Activated naive CD4-positive, alpha-beta T cell treated with anti-CD3 and anti-CD28 coated beads for 36 hours (primary cell): ENCODE measurements at regions of chr11 and their contacts with region 1.

Region 1: DNA sequence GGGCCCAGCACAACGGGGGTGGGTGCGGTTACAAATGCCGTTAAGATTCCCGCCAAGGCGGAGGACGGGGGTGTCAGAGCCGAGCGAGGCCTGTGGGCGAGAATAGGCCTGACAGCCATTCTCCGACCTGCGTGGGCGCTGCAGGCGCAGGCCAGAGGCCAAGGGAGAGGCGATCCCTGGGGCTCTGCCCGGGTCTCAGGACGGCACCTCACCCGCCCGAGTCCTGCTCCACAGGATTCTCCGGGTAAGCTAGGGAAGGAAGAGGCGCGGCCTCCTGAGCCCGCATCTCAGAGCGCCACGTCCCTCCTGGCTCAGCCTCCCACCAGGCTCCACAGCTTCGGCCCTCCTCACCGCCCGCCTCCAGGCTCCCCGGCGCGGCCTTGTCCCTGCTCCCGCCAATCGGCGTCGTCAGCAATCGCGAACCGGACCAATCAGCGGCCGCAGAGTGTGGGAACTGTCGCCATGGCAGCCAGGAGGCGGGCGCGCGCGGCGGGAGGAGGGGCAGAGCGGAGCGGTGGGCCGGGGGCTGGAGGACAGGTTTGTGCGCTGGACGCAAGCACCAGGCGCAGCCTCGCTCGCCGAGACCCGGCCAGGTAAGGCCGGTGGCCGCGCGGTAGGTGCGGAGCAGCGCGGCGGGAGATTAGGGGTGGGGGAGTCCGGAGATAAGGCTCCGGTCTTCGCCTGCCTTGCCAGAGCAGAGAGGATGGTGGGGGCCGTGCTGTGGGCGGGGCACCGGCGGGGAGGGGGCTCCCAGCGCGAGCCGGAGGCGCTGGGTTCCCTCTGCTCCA is at the start of gene NUCB2:
- DNase-seq: peak; percentile 98
- H3K4me3 Mint-ChIP-seq: peak within 1 kb of the TSS; percentile 75
- H3K27ac Mint-ChIP-seq: peak within 1 kb of the TSS; percentile 83
- H3K4me1 Mint-ChIP-seq: peaks cover 33% of the 10 kb centered on the region
- H3K27me3 Mint-ChIP-seq: no peaks in the 10 kb centered on the region
- total RNA-seq, gene NUCB2: 67.7 to 74.0 TPM

Region 2: DNA sequence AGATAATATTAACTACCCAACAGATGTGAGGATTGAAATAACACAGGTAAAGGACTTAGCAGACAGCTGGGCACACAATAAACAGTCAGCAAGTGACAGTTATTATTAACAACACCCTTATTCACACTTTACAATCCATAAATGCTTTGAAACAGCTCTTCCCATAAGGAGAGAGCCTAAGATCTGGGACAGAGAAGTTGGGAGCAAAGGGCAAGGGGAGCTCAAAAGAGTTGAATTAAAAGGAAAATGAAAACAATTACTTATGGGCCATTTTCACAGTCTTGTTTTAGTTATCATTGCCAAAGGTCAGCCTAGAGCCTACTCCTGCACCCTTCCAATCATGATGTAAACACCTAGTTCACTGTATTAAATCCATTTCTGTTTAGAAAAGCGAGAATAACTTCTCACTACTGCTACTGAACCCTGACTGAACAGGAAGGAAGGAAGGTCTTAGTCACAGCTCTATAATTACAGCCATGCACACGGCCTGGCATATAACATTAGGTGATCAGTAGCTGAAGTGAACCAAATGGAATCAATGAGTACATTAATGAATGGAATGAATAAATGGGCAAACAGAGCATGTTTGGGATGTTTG is 373.6 kb before region 1 on chr11:
- CTCF ChIA-PET with region 1: no interaction called
- intact Hi-C with region 1: loop called (anchors 5 kb)
- DNase-seq: peak; percentile 30
- H3K4me3 Mint-ChIP-seq: peak overlapping the region; percentile 3
- H3K27ac Mint-ChIP-seq: peak overlapping the region; percentile 92
- H3K4me1 Mint-ChIP-seq: peaks cover 43% of the 10 kb centered on the region
- H3K27me3 Mint-ChIP-seq: no peaks in the 10 kb centered on the region

Region 3: GRCh38 chr11:17207317-17208258 is 68.8 kb before region 1 on chr11 and contains the start of gene PIK3C2A:
- CTCF ChIA-PET with region 1: no interaction called
- intact Hi-C with region 1: loop called (anchors 1 kb)
- DNase-seq: peak; percentile 97
- H3K4me3 Mint-ChIP-seq: peak within 1 kb of the TSS; percentile 99
- H3K27ac Mint-ChIP-seq: peak within 1 kb of the TSS; percentile 92
- H3K4me1 Mint-ChIP-seq: peaks cover 30% of the 10 kb centered on the region
- H3K27me3 Mint-ChIP-seq: no peaks in the 10 kb centered on the region
- total RNA-seq, gene PIK3C2A: 16.4 to 17.3 TPM

Region 4: GRCh38 chr11:17259519-17259918 is 16.9 kb before region 1 on chr11:
- CTCF ChIA-PET with region 1: no interaction called
- intact Hi-C with region 1: loop called (anchors 1 kb)
- DNase-seq: no peak
- H3K4me3 Mint-ChIP-seq: no peak overlapping the region
- H3K27ac Mint-ChIP-seq: no peak overlapping the region
- H3K4me1 Mint-ChIP-seq: peaks cover 21% of the 10 kb centered on the region
- H3K27me3 Mint-ChIP-seq: no peaks in the 10 kb centered on the region

Region 5: GRCh38 chr11:18314784-18315523 is 1038.5 kb after region 1 on chr11:
- CTCF ChIA-PET with region 1: no interaction called
- intact Hi-C with region 1: loop called (anchors 5 kb)
- DNase-seq: no peak
- H3K4me3 Mint-ChIP-seq: no peak overlapping the region
- H3K27ac Mint-ChIP-seq: no peak overlapping the region
- H3K4me1 Mint-ChIP-seq: peaks cover 28% of the 10 kb centered on the region
- H3K27me3 Mint-ChIP-seq: no peaks in the 10 kb centered on the region